Activated CD4-positive, alpha-beta T cell treated with anti-CD3 and anti-CD28 coated beads for 36 hours (primary cell): ENCODE measurements at regions of chr2 and their contacts with region 1.

Region 1: GRCh38 chr2:190904640-190905261 is 24.1 kb downstream of the GLS start:
- DNase-seq: no peak
- ATAC-seq: no peak
- H3K4me3 Mint-ChIP-seq: no peak overlapping the region
- H3K27ac Mint-ChIP-seq: no peak overlapping the region
- H3K4me1 Mint-ChIP-seq: peaks cover 33% of the 10 kb centered on the region
- H3K27me3 Mint-ChIP-seq: no peaks in the 10 kb centered on the region

Region 2: DNA sequence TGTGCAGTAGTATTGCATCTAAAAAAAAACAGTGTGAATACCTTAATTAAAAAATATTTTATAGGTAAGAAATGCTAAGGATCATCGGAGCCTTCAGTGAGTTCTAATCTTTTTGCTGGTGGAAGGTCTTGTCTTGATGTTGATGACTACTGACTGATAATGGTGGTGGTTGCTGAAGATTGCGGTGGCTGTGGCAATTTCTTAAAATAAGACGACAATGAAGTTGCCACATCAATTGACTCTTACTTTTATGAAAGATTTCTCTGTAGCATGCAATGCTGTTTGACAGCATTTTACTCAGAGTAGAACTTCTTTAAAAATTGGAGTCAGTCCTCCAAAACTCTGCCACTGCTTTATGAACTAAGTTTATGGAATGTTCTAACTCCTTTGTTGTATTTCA is 12.1 kb after region 1 on chr2:
- CTCF ChIA-PET with region 1: interaction called, 4 read pairs
- POLR2A ChIA-PET with region 1: no interaction called
- intact Hi-C with region 1: loop called in 1 of 2 experiments (anchors 1 kb)
- DNase-seq: peak; percentile 29
- ATAC-seq: peak; percentile 13
- H3K4me3 Mint-ChIP-seq: no peak overlapping the region
- H3K27ac Mint-ChIP-seq: peak overlapping the region; percentile 74
- H3K4me1 Mint-ChIP-seq: peaks cover 52% of the 10 kb centered on the region
- H3K27me3 Mint-ChIP-seq: no peaks in the 10 kb centered on the region

Region 3: GRCh38 chr2:190940454-190940853 is 35.7 kb after region 1 on chr2:
- CTCF ChIA-PET with region 1: no interaction called
- POLR2A ChIA-PET with region 1: no interaction called
- intact Hi-C with region 1: no loop called
- DNase-seq: no peak
- ATAC-seq: no peak
- H3K4me3 Mint-ChIP-seq: no peak overlapping the region
- H3K27ac Mint-ChIP-seq: no peak overlapping the region
- H3K4me1 Mint-ChIP-seq: peaks cover 7% of the 10 kb centered on the region
- H3K27me3 Mint-ChIP-seq: no peaks in the 10 kb centered on the region

Region 4: DNA sequence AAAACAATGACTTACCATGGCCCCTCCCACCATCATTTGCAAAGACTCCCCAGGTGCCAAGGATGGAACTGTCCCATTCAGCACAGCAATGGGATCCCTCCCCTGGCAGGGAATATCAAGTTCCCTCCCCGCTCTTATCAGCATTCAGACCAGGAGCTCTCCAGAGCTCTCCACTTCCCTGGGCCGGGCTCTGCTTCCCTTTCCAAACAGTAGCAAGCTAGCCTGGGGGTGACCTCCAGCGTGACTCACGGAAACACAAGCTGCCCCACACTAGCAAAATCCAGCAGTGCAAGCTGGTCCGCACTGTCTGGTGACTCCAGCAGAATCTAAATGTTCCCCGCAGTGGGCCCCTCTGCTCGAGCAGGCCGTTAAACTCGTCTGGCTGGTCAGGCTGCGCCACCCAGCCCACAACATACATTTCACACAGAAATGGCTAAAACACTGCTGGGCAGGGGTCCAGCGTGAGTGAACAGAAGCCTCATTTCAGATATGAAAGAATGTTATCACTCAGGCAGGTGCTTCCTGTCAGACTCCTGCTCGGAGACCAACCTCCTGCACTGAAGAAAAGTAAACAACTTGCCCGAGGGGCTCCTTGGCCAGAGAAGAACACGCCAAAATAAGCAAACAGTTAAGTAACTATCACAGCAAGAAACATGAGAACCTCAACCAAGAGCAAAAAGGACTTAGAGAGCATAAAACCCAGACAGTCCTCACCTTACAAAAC is 75.3 kb after region 1 on chr2:
- CTCF ChIA-PET with region 1: no interaction called
- POLR2A ChIA-PET with region 1: no interaction called
- intact Hi-C with region 1: no loop called
- DNase-seq: no peak
- ATAC-seq: no peak
- H3K4me3 Mint-ChIP-seq: no peak overlapping the region
- H3K27ac Mint-ChIP-seq: peak overlapping the region; percentile 78
- H3K4me1 Mint-ChIP-seq: peaks cover 69% of the 10 kb centered on the region
- H3K27me3 Mint-ChIP-seq: no peaks in the 10 kb centered on the region